IMR-90 (cell line): ENCODE measurements at regions of chr2 and their contacts with region 1.

Region 1: DNA sequence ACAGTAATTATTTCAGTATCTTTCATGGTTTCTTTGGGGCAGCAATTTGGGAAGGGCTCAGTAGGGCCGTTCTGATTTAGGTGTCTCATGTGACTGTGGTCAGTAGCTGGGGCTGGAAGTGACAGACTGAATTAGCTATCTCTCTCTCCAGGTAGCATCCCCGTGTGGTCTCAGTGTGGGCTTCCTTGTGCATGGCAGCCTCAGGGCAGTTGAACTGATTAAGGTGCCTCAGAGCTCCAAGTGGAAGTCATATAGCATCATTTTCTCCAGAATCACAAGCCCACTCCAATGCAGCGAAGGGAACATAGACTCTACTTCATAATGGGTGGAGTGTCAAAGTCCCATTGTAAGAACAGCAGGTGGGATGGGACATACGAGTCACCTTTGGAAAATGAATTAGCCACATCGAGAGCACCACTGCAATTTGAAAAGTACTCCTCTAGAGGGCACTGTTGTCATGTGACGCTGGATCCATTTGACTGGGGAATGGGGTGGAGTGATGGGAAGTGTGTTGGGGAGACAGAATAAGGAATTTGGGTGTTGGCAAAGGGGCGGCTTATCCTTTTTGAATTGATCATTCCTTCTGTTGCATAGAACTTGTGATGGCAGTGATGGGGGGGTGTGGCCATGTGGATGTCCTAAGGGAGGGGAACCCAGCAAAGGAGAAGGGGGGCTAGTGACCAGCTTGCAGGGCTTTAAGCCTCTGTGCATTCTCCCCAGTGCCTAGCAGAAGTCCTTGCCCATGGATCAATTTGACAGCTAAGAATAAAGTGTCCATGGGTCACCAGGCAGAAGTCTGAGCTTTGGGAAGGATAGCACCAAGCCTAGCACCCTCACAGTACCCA is 39.3 kb upstream of the FAM136A start:
- DNase-seq: peak; percentile 26
- ATAC-seq: peak; percentile 78
- H3K4me3 ChIP-seq: no peak overlapping the region
- H3K27ac ChIP-seq: no peak overlapping the region
- H3K4me1 ChIP-seq: no peaks in the 10 kb centered on the region
- H3K27me3 ChIP-seq: peaks cover 6% of the 10 kb centered on the region
- CTCF ChIP-seq: peak; percentile 72
- POLR2A ChIP-seq: no peak
- RAD21 ChIP-seq: peak; percentile 87

Region 2: GRCh38 chr2:70616168-70616694 is 275.1 kb after region 1 on chr2:
- CTCF ChIA-PET with region 1: interaction called, 7 read pairs
- POLR2A ChIA-PET with region 1: no interaction called
- dilution Hi-C with region 1: no loop called
- in situ Hi-C with region 1: loop called (anchors 10 kb)
- intact Hi-C with region 1: loop called (anchors 1 kb)
- DNase-seq: no peak
- ATAC-seq: no peak
- H3K4me3 ChIP-seq: no peak overlapping the region
- H3K27ac ChIP-seq: no peak overlapping the region
- H3K4me1 ChIP-seq: no peaks in the 10 kb centered on the region
- H3K27me3 ChIP-seq: peaks cover 18% of the 10 kb centered on the region
- CTCF ChIP-seq: no peak
- POLR2A ChIP-seq: no peak
- RAD21 ChIP-seq: no peak

Region 3: DNA sequence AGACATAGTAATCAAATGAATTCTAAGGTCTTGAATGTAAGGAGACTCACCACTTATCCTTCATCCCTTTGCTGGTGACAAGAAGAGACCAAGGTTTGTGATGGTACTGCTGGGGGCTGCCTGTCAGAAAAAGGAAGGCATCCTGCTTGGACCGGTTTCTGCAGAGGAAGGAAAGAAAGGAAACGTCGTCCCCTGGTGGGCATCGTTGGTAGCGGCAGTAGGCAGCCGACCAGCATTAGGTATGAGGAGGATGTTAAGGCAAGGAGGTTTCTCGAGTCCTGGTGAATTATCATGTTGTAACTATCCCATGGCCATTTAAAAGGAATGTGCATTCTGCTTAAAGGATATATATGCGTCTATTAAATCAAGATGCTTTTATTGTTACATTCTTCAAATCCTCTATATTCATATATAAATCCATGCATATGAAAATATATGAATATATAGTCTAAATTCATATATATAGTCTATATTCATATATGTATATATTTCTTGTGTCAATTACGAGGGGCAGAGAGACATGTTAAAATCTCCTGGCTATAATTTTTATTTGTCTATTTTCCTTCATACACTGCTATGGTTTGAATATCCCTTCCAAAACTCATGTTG is 306.8 kb after region 1 on chr2:
- CTCF ChIA-PET with region 1: no interaction called
- POLR2A ChIA-PET with region 1: no interaction called
- dilution Hi-C with region 1: no loop called
- in situ Hi-C with region 1: no loop called
- intact Hi-C with region 1: loop called (anchors 1 kb)
- DNase-seq: peak; percentile 44
- ATAC-seq: peak; percentile 93
- H3K4me3 ChIP-seq: no peak overlapping the region
- H3K27ac ChIP-seq: no peak overlapping the region
- H3K4me1 ChIP-seq: no peaks in the 10 kb centered on the region
- H3K27me3 ChIP-seq: peaks cover 5% of the 10 kb centered on the region
- CTCF ChIP-seq: peak; percentile 88
- POLR2A ChIP-seq: no peak
- RAD21 ChIP-seq: peak; percentile 78